ENCODE measurements at regions of chr15 and their contacts with region 1.

Region 1: DNA sequence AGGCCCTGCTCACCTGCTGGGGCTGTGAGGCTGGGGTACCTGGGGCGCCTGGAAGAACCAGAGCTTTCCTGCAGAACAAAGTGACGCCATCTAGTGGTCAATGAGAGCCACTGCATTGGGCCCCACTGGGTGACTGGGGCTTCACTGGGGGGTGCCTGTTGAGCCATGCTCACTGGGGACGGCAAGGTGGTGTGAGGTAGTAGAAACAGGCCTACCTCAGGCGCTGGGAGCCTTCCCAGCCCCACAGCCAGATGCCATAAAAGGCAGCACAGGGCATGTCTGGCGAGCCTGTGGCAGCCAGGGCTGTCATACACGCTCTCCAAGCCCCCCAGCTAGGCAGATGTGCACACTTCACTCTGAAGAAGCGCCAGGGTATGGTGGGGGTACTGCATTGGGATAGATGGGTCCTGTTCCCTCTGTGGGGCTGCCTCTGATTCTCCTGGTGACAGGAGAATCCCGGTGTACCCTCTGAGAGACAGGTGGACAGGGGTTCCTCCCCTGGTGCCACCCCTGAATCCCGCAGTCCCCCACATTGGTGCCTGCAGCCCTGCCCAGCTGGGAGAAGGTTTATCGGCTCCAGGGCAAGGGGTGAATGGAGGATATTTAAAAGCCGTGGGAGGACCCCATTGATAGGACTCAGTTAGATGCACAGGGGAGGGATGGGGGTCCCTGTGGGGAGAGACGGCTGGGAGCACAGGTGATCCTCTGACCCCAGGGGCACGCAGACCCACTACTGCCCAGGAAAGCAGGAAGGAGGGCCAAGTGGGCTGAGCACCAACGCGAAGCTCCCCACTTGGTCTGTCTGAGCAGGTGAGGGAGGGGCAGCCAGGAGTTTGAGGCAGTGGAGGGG is 178.8 kb downstream of the NSMCE3 start:
- DNase-seq: peak; percentile 41
- H3K27ac ChIP-seq: no peak overlapping the region
- CTCF ChIP-seq: peak; percentile 76

Region 2: GRCh38 chr15:28994831-28995596 is 95.8 kb before region 1 on chr15:
- CTCF ChIA-PET with region 1: no interaction called
- POLR2A ChIA-PET with region 1: no interaction called
- DNase-seq: no peak
- H3K27ac ChIP-seq: no peak overlapping the region
- CTCF ChIP-seq: no peak

Region 3: DNA sequence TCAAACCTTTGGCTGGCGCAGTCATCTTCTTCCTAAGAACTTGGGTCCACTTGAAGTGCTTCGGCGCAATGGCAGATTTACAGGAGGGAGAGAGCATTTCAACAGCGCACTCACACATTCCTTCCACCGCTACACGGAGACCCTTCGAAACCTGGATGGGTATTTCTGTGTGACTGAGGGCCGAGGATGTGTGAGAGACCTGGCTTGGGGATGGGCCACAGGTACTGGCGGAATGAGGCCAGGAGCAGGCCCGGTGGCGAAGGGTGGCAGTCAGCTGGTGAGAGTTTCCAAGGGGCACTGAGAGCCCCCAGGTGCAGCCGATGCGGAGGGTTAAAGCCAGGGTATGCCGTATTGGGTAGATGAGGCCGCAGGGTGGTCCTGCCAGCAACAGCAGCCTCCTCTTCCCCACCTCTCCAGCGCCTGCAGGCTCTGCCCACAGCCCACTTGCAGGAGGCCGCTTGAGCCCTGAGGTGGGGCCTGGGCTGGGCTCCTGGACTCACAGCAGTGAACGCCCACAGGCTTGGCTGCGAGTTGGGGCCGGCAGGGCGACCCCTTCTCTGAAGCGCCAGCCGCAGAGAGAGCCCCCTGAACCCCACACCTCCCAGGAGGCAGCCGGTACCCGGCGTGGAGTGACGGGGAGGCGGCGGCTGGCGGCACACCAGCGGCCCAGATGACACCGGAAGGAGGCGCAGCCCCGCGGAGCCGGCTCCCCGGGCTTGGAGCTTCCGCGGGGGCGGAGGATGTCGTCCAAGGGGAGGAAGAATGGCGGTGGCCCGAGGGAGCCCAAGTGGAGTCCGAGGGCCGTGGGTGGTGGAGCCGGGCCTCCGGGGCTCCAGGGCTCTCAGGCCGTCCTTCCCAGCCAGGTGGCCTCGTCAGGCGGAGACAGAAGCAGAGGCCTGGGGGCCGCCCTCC is 12.3 kb after region 1 on chr15:
- CTCF ChIA-PET with region 1: interaction called, 10 read pairs
- POLR2A ChIA-PET with region 1: no interaction called
- DNase-seq: no peak
- H3K27ac ChIP-seq: no peak overlapping the region
- CTCF ChIP-seq: no peak

Measured in RWPE1 (cell line).